ENCODE measurements at regions of chr4 and their contacts with region 1.

Region 1: DNA sequence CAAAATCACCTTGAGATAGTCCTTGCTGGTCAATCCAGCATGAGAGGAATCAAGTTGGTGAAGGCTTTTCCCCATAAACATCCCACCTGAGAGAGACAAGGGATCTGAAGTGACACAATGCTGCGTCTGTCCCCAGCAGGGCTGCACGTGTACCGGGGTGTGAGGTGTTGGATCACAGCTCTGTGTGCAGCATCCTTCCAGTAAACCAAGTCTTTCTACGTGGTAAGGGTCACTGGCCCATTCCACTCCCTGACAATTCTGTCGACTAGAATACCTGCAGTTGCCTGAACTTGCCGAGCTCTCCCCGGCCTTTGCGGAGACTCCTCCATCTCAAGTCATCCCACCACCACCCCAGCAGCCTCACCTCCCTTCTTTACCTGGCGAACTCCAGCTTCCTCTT is 14.8 kb downstream of the HELT start:
- DNase-seq: no peak
- ATAC-seq: no peak
- H3K4me3 ChIP-seq: no peak overlapping the region
- H3K4me3 Mint-ChIP-seq: no peak overlapping the region
- H3K27ac ChIP-seq: no peak overlapping the region
- H3K27ac Mint-ChIP-seq: no peak overlapping the region
- H3K4me1 ChIP-seq: no peaks in the 10 kb centered on the region
- H3K4me1 Mint-ChIP-seq: peaks cover 0 to 4% (median 0%) of the 10 kb centered on the region in 7 donors
- H3K27me3 ChIP-seq: no peaks in the 10 kb centered on the region
- H3K27me3 Mint-ChIP-seq: peaks cover 17 to 51% (median 30%) of the 10 kb centered on the region in 5 donors

Region 2: GRCh38 chr4:184232206-184232820 is 800.8 kb before region 1 on chr4:
- CTCF ChIA-PET with region 1: interaction called, 10 read pairs
- POLR2A ChIA-PET with region 1: no interaction called
- intact Hi-C with region 1: no loop called
- DNase-seq: no peak
- ATAC-seq: no peak
- H3K4me3 ChIP-seq: no peak overlapping the region
- H3K4me3 Mint-ChIP-seq: no peak overlapping the region
- H3K27ac ChIP-seq: no peak overlapping the region
- H3K27ac Mint-ChIP-seq: peak overlapping the region in 4 of 9 donors; percentile 1 to 42 (median 26)
- H3K4me1 ChIP-seq: peaks cover 15 to 19% of the 10 kb centered on the region in 2 donors
- H3K4me1 Mint-ChIP-seq: peaks cover 16 to 78% (median 30%) of the 10 kb centered on the region in 7 donors
- H3K27me3 ChIP-seq: no peaks in the 10 kb centered on the region
- H3K27me3 Mint-ChIP-seq: peaks cover 0 to 11% (median 0%) of the 10 kb centered on the region in 5 donors

Measured in naive thymus-derived CD4-positive, alpha-beta T cell (primary cell).